ENCODE measurements at regions of chr1 and their contacts with region 1.

Region 1: DNA sequence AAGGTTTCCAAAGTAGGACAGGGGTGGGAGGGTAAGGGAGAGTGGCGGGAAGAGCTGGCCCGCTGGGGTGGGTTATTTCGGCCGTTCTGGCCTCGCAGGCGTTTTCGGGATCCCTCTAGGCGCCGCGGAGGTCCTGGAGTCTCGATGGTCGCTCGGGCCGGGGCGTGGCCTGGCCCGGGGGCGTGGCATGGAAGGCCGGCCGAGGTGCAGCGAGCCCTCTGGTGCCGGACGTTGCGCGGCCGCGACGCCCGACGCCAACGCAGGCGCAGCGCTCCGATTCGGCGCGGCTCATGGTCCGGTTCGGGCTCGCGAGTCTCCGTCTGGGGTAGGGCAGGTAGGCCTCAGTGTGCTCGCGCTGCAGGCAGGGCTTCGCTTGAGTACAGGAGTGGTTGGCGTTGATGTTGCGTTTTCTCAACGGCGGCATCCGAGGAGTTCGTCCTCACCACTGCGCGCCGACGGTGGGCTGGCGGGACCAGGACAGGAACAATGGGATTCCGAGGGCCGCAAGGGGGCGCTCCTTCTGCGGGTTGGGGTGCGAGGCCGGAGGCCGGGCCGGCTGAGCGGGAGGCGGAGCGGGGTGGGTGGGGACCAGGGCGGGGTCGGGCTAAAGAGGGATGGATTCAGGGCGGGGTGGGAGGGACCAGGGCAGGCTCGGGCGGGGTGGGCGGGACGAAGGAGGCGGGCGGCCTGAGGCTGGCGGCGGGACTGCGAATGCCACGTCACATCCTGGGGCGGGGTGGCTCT is at the start of gene PGBD2:
- DNase-seq: peak; percentile 91
- H3K4me3 Mint-ChIP-seq: peak within 1 kb of the TSS; percentile 93
- H3K27ac Mint-ChIP-seq: peak within 1 kb of the TSS; percentile 97
- H3K4me1 Mint-ChIP-seq: peaks cover 24% of the 10 kb centered on the region
- H3K27me3 Mint-ChIP-seq: peaks cover 12% of the 10 kb centered on the region
- total RNA-seq, gene PGBD2: 6.7 and 6.9 TPM in 2 replicates

Region 2: DNA sequence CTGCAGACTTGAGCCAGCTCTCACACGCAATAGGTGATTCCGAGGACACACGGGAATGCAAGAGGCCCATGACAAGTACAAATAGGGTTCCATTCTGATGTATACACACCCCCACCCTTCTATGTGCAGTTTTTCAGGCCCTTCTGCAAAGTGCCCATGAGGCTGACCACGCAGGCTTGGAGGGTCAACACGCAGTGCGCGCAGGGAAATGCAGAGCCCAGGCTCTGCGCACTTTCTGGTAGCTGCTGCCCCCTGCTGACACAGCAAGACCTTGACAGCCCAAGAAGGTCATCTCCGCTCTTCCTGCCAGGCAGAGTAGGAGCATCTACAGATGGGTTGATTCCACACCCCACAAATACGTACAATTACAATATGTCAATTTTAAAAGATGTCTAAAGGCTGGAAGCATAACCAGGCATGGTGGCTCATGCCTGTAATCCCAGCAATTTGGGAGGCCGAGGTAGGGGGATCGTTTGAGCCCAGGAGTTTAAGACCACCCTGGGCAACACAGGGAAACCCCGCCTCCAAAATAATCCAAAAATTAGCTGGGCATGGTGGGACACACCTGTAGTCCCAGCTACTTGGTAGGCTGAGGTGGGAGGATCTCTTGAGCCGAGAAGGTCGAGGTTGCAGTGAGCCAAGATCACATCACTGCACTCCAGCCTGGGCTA is 99.0 kb before region 1 on chr1:
- intact Hi-C with region 1: no loop called
- DNase-seq: peak; percentile 24
- H3K4me3 Mint-ChIP-seq: no peak overlapping the region
- H3K27ac Mint-ChIP-seq: no peak overlapping the region
- H3K4me1 Mint-ChIP-seq: no peaks in the 10 kb centered on the region
- H3K27me3 Mint-ChIP-seq: no peaks in the 10 kb centered on the region

Region 3: DNA sequence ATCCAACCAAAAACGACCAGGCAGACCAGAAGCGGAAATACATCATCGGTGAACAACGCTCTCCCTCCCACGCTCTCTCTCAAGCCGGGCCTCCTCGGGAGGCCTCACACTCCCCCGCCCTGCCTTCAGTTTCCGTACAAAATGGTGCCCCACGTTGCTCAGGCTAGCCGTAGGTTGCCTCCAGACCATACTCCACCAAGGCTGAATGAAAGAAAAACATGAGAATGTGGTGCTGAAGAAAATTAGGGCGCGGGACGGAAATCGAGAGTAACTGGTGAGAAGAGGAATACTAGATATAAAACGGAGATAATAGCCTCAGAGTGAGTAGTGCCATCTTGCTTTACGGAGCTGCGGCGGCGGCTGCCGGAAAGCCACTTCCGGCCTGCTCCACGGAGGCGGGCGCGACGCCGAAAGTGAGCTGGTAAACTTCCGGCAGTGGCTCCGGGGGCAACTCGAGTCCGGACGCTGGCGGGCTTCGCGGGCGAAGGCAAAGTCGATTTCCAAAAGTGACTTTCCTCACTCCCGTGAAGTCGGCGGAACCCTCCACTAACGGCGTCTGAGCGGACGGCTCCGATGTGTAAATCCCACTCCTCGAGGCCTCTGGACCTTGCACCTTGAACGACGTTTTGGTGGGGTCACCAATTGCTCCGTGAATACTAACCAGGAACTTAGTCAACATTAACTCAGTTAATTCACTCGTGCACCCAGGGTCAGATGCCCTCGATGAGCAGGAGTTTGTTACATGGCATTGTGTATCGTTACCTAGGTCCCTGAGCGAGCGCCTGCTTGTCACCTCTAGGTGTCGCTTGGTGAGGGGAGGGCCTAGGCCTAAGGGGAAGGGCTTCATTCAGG is 80.0 kb before region 1 on chr1 and contains the start of gene SH3BP5L:
- intact Hi-C with region 1: loop called (anchors 1 kb)
- DNase-seq: peak; percentile 88
- H3K4me3 Mint-ChIP-seq: peak within 1 kb of the TSS; percentile 92
- H3K27ac Mint-ChIP-seq: peak within 1 kb of the TSS; percentile 99
- H3K4me1 Mint-ChIP-seq: peaks cover 37% of the 10 kb centered on the region
- H3K27me3 Mint-ChIP-seq: no peaks in the 10 kb centered on the region
- total RNA-seq, gene SH3BP5L: 27.1 TPM in 2 replicates

Region 4: GRCh38 chr1:248837794-248838356 is 68.3 kb before region 1 on chr1 and contains the start of gene ZNF672:
- intact Hi-C with region 1: loop called (anchors 1 kb)
- DNase-seq: peak; percentile 93
- H3K4me3 Mint-ChIP-seq: no peak within 1 kb of the TSS
- H3K27ac Mint-ChIP-seq: peak within 1 kb of the TSS; percentile 90
- H3K4me1 Mint-ChIP-seq: peaks cover 21% of the 10 kb centered on the region
- H3K27me3 Mint-ChIP-seq: peaks cover 2% of the 10 kb centered on the region
- total RNA-seq, gene ZNF672: 46.0 and 51.6 TPM in 2 replicates

Region 5: GRCh38 chr1:248849152-248849551 is 57.0 kb before region 1 on chr1:
- intact Hi-C with region 1: no loop called
- DNase-seq: no peak
- H3K4me3 Mint-ChIP-seq: no peak overlapping the region
- H3K27ac Mint-ChIP-seq: no peak overlapping the region
- H3K4me1 Mint-ChIP-seq: peaks cover 4% of the 10 kb centered on the region
- H3K27me3 Mint-ChIP-seq: no peaks in the 10 kb centered on the region

Region 6: DNA sequence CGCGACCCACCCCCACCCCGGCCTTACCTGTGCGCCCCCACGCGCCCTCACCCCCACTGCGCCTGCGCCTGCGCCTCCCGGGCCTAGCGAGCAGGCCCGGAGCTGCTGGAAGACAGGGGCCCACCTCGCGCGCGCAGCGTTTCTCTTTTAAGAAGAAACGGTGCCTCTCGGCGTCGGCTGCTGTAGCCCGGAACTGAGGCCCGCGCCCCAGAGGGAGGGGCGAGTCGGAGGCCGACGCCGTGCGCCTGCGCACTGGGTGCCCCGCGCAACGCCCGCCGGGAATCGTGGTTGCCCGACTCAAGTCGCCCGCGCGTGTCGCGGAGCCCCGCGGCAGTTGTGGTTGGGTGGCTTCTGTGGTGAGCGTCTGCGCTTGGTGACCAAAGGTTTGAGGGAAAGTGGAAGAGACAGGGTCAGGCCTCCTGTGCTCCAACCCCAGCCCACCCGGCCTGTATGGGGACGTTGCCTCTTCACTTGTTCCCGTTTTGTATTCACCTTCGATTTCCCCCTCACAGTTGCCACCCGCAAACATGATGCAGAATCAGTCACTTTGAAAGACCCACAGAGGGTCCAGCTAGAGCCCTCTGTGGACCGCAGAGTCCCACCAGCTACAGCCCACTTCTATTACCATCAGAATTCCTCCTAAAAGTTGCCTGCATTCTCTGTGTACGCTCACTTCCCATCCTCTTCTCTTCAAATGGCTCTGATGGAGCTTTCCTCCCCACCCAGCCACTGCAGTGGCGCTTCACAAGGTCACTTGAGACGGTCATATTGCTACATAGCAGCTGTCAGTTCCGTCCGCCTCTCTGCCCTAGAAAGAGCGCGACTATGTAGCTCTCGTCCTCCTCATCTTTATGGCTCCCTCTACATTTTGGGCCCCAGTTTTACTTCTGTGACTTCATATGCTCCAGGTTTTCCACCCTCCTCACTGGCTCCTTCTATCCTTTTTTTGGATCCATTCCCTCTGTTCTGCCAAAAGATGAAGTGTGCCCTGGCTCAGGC is 47.0 kb before region 1 on chr1 and contains the start of gene ZNF692:
- intact Hi-C with region 1: loop called (anchors 1 kb)
- DNase-seq: peak; percentile 96
- H3K4me3 Mint-ChIP-seq: peak within 1 kb of the TSS; percentile 93
- H3K27ac Mint-ChIP-seq: peak within 1 kb of the TSS; percentile 96
- H3K4me1 Mint-ChIP-seq: peaks cover 40% of the 10 kb centered on the region
- H3K27me3 Mint-ChIP-seq: no peaks in the 10 kb centered on the region
- total RNA-seq, gene ZNF692: 86.4 and 87.0 TPM in 2 replicates

Region 7: DNA sequence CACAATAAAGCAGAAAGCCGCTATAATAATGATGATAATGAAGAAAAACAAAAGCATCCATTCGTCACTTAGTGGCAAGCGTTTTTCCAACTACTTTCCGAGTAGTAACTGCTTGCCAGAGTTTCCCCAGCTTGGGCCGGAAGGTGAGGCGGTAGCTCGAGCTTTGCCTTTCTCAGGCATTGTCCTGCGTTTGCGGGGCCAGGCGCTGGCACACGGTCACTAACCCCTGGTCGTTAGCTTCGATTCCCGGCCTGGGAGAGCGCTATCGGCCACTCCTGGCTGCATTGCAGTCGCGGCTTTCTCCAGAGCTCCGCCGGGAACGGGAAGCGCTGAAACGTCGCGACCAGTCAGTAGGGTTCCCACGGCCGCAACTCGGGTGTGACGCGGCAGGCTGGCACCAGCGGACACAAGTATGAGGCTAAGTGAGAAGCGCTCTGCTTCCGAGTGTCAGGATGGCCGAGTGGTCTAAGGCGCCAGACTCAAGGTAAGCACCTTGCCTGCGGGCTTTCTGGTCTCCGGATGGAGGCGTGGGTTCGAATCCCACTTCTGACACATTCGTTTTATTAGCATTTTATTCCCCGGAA is 32.7 kb before region 1 on chr1:
- intact Hi-C with region 1: loop called (anchors 1 kb)
- DNase-seq: peak; percentile 91
- H3K4me3 Mint-ChIP-seq: peak overlapping the region; percentile 87
- H3K27ac Mint-ChIP-seq: peak overlapping the region; percentile 96
- H3K4me1 Mint-ChIP-seq: peaks cover 22% of the 10 kb centered on the region
- H3K27me3 Mint-ChIP-seq: peaks cover 17% of the 10 kb centered on the region

Region 8: DNA sequence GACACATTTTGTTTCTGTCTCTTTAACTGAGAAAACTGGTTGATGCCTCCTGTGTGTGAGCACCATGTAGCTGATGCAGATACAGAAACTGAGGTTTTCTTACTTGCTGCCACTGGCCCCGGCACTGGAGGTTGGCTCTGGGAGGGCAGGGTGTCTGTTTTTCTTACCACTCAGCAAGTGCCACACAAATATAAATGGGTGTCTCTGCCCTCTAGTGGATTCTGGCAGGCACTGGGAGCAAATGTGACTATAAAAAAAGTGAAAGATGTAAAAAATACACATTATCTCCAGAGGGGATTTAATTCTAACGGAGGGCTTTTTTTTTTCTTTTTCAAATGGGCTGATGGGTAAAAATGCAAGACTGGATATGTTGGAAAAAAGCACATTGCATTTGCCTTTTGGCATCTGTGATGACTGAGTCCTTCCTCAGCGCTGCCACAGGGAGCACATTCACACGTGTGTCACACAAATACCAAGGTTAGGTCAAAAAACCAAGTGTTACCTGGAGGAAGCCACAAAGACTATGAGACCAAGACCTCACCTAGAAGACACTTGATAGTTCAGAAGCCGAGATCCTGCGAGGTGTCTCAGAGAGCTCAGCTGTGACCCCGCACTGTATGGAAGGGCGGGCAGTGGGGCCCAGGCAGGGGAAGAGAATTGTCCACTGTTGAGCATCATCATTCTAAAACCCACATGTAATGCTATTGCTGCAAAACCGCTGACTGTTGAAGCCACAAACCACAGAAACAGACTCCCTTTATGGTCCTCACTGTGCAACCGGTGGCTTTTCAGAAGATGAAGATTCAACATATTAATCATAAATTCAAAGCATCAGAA is 18.7 kb after region 1 on chr1:
- intact Hi-C with region 1: loop called (anchors 1 kb)
- DNase-seq: peak; percentile 54
- H3K4me3 Mint-ChIP-seq: peak overlapping the region; percentile 18
- H3K27ac Mint-ChIP-seq: peak overlapping the region; percentile 71
- H3K4me1 Mint-ChIP-seq: peaks cover 47% of the 10 kb centered on the region
- H3K27me3 Mint-ChIP-seq: no peaks in the 10 kb centered on the region

Measured in activated T-helper 2 cell treated with anti-CD3 and anti-CD28 coated beads, Interferon-gamma antibody, Interleukin-2, Interleukin-4, amounts not matched to agents 10 μg/mL and 5 μg/mL and 100 μg/mL, durations not matched to agents 14 hours and 24 hours and 36 hours (primary cell).